Activated T-helper 1 cell treated with anti-CD3 and anti-CD28 coated beads, Interleukin-12 subunit alpha, Interleukin-12 subunit beta, Interleukin-2, Interleukin-4 antibody, amounts not matched to agents 30 ng/mL and 10 ng/mL and 1 ng/mL, durations not matched to agents 14 hours and 24 hours and 36 hours (primary cell): ENCODE measurements at regions of chr9 and their contacts with region 1.

Region 1: DNA sequence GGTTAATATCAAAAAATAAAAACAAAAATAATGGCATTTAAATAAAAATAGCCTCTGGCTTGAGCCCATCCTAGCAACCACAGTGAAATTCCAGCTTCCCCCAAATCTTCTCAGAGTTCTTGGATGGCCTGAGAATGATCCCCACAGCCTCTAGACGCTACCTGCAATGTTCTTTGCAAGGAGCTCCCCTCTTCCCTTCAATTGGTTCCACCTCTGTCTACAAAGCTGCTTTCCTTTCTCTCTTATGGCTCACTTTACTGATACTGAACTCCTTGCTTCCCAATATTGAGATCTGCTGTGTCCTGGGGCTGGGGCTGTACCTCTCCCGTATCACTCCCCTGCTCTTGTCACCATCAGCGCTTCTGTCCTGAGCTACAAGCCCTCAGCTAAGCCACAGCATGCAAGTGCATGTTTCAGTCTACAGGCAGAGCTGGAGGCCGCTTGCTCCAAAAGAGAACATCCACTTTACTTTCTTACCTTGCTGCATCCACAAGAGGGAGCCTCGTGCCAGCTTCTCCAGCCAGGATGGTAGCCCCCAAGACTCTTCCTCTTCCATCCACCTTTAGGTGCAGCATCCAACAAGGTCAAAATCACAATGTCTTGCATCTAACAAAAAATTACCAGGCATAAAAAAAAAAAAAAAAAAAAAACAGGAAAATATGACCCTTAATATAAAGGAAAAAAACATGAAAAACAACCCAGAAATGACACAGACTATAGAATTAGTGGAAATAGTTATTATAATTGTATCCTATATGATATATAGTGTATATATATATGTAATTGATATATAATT is 57.4 kb upstream of the PRSS3 start:
- DNase-seq: no peak
- H3K4me3 Mint-ChIP-seq: no peak overlapping the region
- H3K27ac Mint-ChIP-seq: no peak overlapping the region
- H3K4me1 Mint-ChIP-seq: no peaks in the 10 kb centered on the region
- H3K27me3 Mint-ChIP-seq: peaks cover 28% of the 10 kb centered on the region

Region 2: DNA sequence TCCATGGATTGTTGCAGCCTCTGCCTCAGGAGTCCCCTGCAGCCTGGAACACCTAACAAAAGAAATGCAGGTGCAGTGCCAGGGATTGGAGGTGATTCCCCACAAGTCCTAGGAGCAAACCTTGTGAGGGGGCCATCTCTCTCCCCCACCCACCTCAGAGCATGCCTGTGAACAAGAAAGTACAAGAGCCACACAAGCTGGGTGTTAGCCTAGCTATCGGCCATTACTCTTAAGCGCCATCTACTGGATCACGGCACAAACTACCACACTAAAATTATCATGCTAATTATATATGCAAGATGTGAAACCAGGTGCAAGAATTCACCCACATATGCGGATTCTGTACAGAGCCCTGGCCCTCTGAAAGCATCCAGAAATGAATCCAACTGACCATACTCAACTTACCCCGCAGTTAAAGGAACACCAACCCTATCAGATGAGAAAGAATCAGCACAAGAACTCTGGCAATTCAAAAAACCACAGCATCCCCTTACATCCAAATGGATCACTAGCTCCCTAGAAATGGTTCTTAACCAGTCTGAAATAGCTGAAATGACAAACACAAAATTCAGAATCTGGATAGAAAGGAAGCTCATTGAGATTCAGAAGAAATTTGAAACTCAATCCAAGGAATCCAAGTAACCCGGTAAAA is 40.8 kb after region 1 on chr9:
- intact Hi-C with region 1: loop called (anchors 1 kb)
- DNase-seq: peak; percentile 27
- H3K4me3 Mint-ChIP-seq: no peak overlapping the region
- H3K27ac Mint-ChIP-seq: no peak overlapping the region
- H3K4me1 Mint-ChIP-seq: peaks cover 6% of the 10 kb centered on the region
- H3K27me3 Mint-ChIP-seq: peaks cover 28% of the 10 kb centered on the region